ENCODE measurements at regions of chr11 and their contacts with region 1.

Region 1: GRCh38 chr11:64924102-64924851 is at the start of gene PPP2R5B:
- DNase-seq: peak; percentile 78 to 94 (median 90)
- ATAC-seq: peak; percentile 94
- H3K4me3 ChIP-seq: peak within 1 kb of the TSS; percentile 69 to 76
- H3K4me3 Mint-ChIP-seq: peak within 1 kb of the TSS; percentile 95
- H3K27ac ChIP-seq: peak within 1 kb of the TSS; percentile 58 to 92
- H3K27ac Mint-ChIP-seq: peak within 1 kb of the TSS; percentile 96
- H3K4me1 ChIP-seq: peaks cover 19% of the 10 kb centered on the region
- H3K4me1 Mint-ChIP-seq: peaks cover 15% of the 10 kb centered on the region
- H3K27me3 ChIP-seq: no peaks in the 10 kb centered on the region
- H3K27me3 Mint-ChIP-seq: no peaks in the 10 kb centered on the region
- CTCF ChIP-seq: no peak
- total RNA-seq, gene PPP2R5B: 14.8 to 18.0 TPM

Region 2: DNA sequence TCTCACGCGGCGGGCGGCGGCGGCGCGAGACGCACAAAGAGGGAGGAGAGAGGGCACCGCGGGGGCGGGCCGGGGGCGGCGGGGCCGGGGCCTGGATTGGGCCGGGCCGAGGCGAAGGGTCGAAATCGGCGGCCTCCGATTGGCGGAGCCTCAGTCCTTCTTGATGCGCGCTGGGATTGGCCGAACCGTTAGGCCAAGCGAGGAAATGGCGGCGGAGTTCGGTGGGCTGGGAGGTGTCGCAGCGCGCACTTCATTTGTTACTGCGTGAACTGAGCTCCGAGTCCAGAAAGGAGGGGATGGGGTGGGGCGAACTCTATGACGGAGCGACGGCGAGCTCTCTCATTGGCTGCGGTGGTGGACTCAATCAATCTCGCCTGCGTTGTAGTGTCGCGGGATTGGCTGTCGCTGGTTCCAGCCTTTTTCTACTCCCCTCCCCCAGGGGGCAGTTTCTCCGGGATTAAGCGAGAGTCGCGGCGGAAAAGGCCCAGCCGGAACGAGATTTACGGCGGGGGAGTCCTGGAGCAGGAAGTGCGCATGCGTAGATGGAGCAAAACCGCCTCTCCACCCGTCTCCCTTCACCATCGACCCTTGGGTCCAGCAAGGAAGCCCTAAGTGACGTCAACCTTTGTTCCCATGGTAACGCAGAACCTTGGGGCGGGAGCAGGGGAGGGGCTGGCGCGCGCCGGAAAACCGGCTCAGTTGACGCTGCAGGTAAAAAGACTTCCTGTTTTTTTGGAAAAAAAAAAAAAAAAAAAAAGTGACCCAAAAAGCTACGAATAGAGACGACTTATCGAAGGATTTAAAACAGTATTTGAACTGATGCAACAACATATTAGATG is 145.6 kb before region 1 on chr11 and contains the start of gene SF1:
- CTCF ChIA-PET with region 1: no interaction called
- POLR2A ChIA-PET with region 1: interaction called, 6 read pairs
- intact Hi-C with region 1: loop called in 1 of 2 experiments (anchors 1 kb)
- DNase-seq: peak; percentile 97 to 100 (median 99)
- ATAC-seq: peak; percentile 82
- H3K4me3 ChIP-seq: peak within 1 kb of the TSS; percentile 70 to 97
- H3K4me3 Mint-ChIP-seq: peak within 1 kb of the TSS; percentile 93
- H3K27ac ChIP-seq: peak within 1 kb of the TSS; percentile 93 to 98
- H3K27ac Mint-ChIP-seq: peak within 1 kb of the TSS; percentile 99
- H3K4me1 ChIP-seq: peaks cover 53% of the 10 kb centered on the region
- H3K4me1 Mint-ChIP-seq: peaks cover 58% of the 10 kb centered on the region
- H3K27me3 ChIP-seq: no peaks in the 10 kb centered on the region
- H3K27me3 Mint-ChIP-seq: no peaks in the 10 kb centered on the region
- CTCF ChIP-seq: no peak
- total RNA-seq, gene SF1: 1,574 to 1,625 TPM

Region 3: GRCh38 chr11:64971421-64972233 is 47.4 kb after region 1 on chr11 and contains the start of gene MAJIN:
- CTCF ChIA-PET with region 1: no interaction called
- POLR2A ChIA-PET with region 1: no interaction called
- intact Hi-C with region 1: loop called in 1 of 2 experiments (anchors 5 kb)
- DNase-seq: peak; percentile 65 to 93 (median 87)
- ATAC-seq: peak; percentile 86
- H3K4me3 ChIP-seq: peak within 1 kb of the TSS; percentile 41 to 47
- H3K4me3 Mint-ChIP-seq: peak within 1 kb of the TSS; percentile 60
- H3K27ac ChIP-seq: peak within 1 kb of the TSS in 1 of 2 experiments; percentile 37
- H3K27ac Mint-ChIP-seq: peak within 1 kb of the TSS; percentile 57
- H3K4me1 ChIP-seq: peaks cover 10% of the 10 kb centered on the region
- H3K4me1 Mint-ChIP-seq: peaks cover 10% of the 10 kb centered on the region
- H3K27me3 ChIP-seq: peaks cover 0 to 2% of the 10 kb centered on the region in 2 experiments
- H3K27me3 Mint-ChIP-seq: peaks cover 5% of the 10 kb centered on the region
- CTCF ChIP-seq: no peak
- total RNA-seq, gene MAJIN: not detected

Region 4: DNA sequence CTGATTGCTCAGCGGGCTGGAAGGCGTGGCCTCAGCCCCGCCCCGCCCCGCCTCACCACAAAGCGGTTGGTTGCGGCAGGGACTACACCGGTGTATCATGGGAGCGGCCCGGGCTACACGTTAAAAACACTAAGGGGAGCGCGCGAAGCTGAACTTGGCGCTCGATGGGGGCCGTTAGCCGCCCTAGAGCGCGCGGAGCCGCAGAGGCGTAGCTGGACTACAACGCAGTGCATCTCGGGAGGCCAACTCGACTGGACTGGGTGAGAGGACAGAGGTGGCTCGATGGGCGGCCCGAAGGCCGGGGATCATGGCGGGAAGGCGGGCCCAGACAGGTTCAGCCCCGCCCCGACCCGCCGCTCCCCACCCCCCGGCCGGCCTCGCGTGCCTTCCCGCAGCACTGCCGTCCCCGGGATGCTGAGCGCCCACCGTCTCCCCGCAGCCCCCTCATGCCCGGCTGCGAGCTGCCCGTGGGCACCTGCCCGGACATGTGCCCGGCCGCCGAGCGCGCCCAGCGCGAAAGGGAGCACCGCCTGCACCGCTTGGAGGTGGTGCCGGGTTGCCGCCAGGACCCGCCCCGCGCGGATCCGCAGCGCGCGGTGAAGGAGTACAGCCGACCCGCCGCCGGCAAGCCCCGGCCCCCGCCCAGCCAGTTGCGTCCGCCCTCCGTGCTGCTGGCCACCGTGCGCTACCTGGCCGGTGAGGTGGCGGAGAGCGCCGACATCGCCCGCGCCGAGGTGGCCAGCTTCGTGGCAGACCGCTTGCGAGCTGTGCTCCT is 116.8 kb after region 1 on chr11 and contains the start of gene SAC3D1:
- CTCF ChIA-PET with region 1: no interaction called
- POLR2A ChIA-PET with region 1: no interaction called
- intact Hi-C with region 1: loop called in 1 of 2 experiments (anchors 1 kb)
- DNase-seq: peak; percentile 67 to 94 (median 85)
- ATAC-seq: peak; percentile 90
- H3K4me3 ChIP-seq: peak within 1 kb of the TSS; percentile 63 to 76
- H3K4me3 Mint-ChIP-seq: peak within 1 kb of the TSS; percentile 93
- H3K27ac ChIP-seq: peak within 1 kb of the TSS; percentile 34 to 82
- H3K27ac Mint-ChIP-seq: peak within 1 kb of the TSS; percentile 91
- H3K4me1 ChIP-seq: peaks cover 17% of the 10 kb centered on the region
- H3K4me1 Mint-ChIP-seq: peaks cover 15% of the 10 kb centered on the region
- H3K27me3 ChIP-seq: no peaks in the 10 kb centered on the region
- H3K27me3 Mint-ChIP-seq: no peaks in the 10 kb centered on the region
- CTCF ChIP-seq: no peak
- total RNA-seq, gene SAC3D1: 0.57 to 0.94 TPM

Region 5: GRCh38 chr11:65095974-65096806 is 171.9 kb after region 1 on chr11 and contains the start of gene VPS51:
- CTCF ChIA-PET with region 1: no interaction called
- POLR2A ChIA-PET with region 1: no interaction called
- intact Hi-C with region 1: loop called in 1 of 2 experiments (anchors 1 kb)
- DNase-seq: peak; percentile 70 to 95 (median 85)
- ATAC-seq: peak; percentile 84
- H3K4me3 ChIP-seq: peak within 1 kb of the TSS; percentile 80 to 81
- H3K4me3 Mint-ChIP-seq: peak within 1 kb of the TSS; percentile 95
- H3K27ac ChIP-seq: peak within 1 kb of the TSS; percentile 82 to 89
- H3K27ac Mint-ChIP-seq: peak within 1 kb of the TSS; percentile 99
- H3K4me1 ChIP-seq: peaks cover 12% of the 10 kb centered on the region
- H3K4me1 Mint-ChIP-seq: peaks cover 24% of the 10 kb centered on the region
- H3K27me3 ChIP-seq: no peaks in the 10 kb centered on the region
- H3K27me3 Mint-ChIP-seq: no peaks in the 10 kb centered on the region
- CTCF ChIP-seq: no peak
- total RNA-seq, gene VPS51: 221 to 263 TPM

Region 6: DNA sequence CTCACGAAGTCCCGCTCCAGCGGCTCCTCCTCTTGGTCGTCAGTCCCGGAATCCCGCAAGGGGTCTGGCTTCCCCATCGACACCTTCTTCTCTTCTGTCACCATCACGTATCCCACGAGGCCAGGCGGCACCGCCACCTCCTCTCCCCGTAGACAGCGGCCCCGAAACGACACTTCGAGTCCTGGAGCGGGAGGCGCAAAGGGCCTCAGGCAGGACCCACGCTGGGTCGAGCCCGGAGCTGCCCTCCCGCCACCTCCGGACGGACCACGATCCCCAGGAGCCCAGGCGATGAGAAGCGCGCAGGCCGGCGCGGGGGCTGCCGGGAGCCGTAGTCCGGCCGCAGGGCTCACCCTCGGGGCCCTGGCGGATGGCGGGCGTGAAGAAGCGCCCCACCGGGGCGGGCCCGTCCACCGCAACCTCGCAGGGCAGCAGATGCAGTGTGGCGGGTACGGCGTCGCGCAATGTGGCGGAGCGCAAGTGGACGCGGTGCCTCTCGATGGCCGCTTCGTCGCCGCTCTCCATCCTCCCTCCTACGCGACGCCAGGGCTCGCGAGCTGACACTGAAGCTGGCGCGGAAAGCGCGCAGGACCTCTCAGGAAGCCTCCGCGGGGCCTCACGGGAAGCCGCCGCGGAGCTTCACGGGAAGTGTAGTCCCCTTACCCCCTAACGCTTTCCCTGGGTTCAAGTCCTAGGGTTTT is 796.1 kb after region 1 on chr11 and contains the start of gene RNASEH2C:
- CTCF ChIA-PET with region 1: no interaction called
- POLR2A ChIA-PET with region 1: no interaction called
- intact Hi-C with region 1: no loop called
- DNase-seq: peak; percentile 53 to 89 (median 73)
- ATAC-seq: peak; percentile 93
- H3K4me3 ChIP-seq: peak within 1 kb of the TSS; percentile 84 to 92
- H3K4me3 Mint-ChIP-seq: peak within 1 kb of the TSS; percentile 90
- H3K27ac ChIP-seq: peak within 1 kb of the TSS; percentile 70 to 73
- H3K27ac Mint-ChIP-seq: peak within 1 kb of the TSS; percentile 88
- H3K4me1 ChIP-seq: peaks cover 22% of the 10 kb centered on the region
- H3K4me1 Mint-ChIP-seq: peaks cover 33% of the 10 kb centered on the region
- H3K27me3 ChIP-seq: no peaks in the 10 kb centered on the region
- H3K27me3 Mint-ChIP-seq: no peaks in the 10 kb centered on the region
- CTCF ChIP-seq: no peak
- total RNA-seq, gene RNASEH2C: 27.7 to 32.0 TPM

Measured in CD8-positive, alpha-beta T cell (primary cell).